CD4-positive, alpha-beta memory T cell (primary cell): ENCODE measurements at regions of chr7 and their contacts with region 1.

Region 1: DNA sequence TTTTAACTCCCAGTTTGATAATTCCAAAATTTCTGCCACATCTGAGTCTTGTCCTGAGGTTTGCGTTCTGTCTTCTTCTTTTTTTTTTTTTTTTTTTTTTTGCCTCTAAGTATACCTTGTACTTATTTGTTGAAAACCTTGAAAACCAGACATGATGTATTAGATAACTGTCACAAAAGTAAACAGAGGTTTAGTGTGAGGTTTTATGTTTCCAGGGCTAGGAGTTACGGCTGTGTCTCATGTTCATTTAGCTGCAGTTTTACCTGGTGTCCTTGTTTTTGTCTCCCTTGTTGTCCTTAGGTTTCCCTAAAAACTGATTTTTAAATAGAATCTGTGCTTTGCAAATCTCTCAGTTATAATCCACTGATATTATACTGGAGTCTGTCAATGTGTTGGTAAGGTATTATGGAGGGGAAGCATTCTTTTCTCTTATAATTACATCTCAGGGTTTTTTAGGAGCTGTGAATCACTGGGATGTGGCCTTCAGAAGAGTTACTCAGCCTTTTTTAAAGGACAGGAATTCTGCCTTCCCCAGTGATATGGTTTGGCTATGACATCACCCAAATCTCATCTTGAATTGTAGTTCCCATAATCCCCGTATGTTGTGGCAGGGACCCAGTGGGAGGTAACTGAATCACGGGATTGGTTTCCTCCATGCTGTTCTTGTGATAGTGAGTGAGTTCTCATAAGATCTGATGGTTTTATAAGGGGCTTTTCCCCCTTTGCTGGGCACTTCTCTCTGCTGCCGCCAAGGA is 95.0 kb downstream of the CDCA7L start:
- DNase-seq: no peak
- H3K4me3 ChIP-seq: no peak overlapping the region
- H3K4me3 Mint-ChIP-seq: peak overlapping the region in 3 of 8 donors; percentile 77 to 83 (median 81)
- H3K27ac ChIP-seq: no peak overlapping the region
- H3K27ac Mint-ChIP-seq: peak overlapping the region in 6 of 7 donors; percentile 17 to 95 (median 78)
- H3K4me1 ChIP-seq: peaks cover 22% of the 10 kb centered on the region
- H3K4me1 Mint-ChIP-seq: peaks cover 10 to 24% (median 18%) of the 10 kb centered on the region in 4 donors
- H3K27me3 ChIP-seq: no peaks in the 10 kb centered on the region
- H3K27me3 Mint-ChIP-seq: peaks cover 0 to 3% of the 10 kb centered on the region in 2 donors

Region 2: GRCh38 chr7:21945454-21946227 is 94.9 kb after region 1 on chr7 and contains the start of gene CDCA7L:
- CTCF ChIA-PET with region 1: no interaction called
- POLR2A ChIA-PET with region 1: no interaction called
- intact Hi-C with region 1: loop called (anchors 5 kb)
- DNase-seq: peak; percentile 26 to 40 (median 38)
- H3K4me3 ChIP-seq: peak within 1 kb of the TSS in 1 of 2 donors; percentile 44
- H3K4me3 Mint-ChIP-seq: peak within 1 kb of the TSS; percentile 83 to 94 (median 88)
- H3K27ac ChIP-seq: no peak within 1 kb of the TSS
- H3K27ac Mint-ChIP-seq: peak within 1 kb of the TSS in 1 of 7 donors; percentile 33
- H3K4me1 ChIP-seq: peaks cover 15% of the 10 kb centered on the region
- H3K4me1 Mint-ChIP-seq: peaks cover 4 to 34% (median 17%) of the 10 kb centered on the region in 4 donors
- H3K27me3 ChIP-seq: no peaks in the 10 kb centered on the region
- H3K27me3 Mint-ChIP-seq: peaks cover 0 to 4% of the 10 kb centered on the region in 2 donors
- total RNA-seq, gene CDCA7L: 17.2 to 19.6 TPM